Gastrocnemius medialis (tissue), 4 donors: ENCODE measurements at regions of chr2 and their contacts with region 1.

Region 1: GRCh38 chr2:217713395-217714286 is 289.2 kb downstream of the TNS1 start:
- DNase-seq: peak; percentile 38 to 64
- ATAC-seq: peak; percentile 76 to 77
- H3K4me3 ChIP-seq: no peak overlapping the region
- H3K27ac ChIP-seq: peak overlapping the region; percentile 30 to 67 (median 41)
- H3K4me1 ChIP-seq: peaks cover 10 to 18% of the 10 kb centered on the region in 2 donors
- H3K27me3 ChIP-seq: no peaks in the 10 kb centered on the region
- CTCF ChIP-seq: peak; percentile 86 to 99 (median 93)
- POLR2A ChIP-seq: no peak

Region 2: DNA sequence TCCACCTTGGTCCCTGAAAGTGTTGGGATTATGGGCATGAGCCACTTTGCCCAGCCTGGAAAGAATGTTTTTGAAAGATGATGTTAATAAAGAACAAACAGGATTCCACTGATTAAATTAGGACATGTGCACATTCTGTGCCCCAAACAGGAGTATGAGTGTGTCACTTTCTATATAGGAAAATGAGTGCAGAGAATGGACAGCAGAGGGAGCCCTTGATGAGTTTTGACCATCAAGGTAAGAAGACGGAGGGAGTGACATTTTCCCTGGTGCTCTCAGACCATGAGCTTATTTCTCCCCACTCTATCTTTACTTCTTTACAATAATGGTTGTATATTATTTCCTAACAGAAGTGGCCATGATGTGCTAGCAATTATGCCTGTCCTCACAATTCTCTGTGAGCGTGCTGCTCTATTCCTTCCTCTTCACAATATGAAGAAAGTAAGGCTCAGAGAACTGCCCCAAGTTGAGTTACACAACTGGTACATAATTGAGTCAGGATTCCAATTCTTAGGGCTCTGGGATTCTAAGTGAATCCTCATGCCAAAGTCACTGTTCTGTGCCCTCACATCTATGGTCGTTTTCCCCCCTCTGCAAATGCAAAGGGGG is 1194.4 kb before region 1 on chr2:
- in situ Hi-C with region 1: loop called in 1 of 4 experiments (anchors 10 kb)
- intact Hi-C with region 1: loop called (anchors 5 kb)
- DNase-seq: peak; percentile 36 to 48
- ATAC-seq: peak; percentile 82 to 93
- H3K4me3 ChIP-seq: no peak overlapping the region
- H3K27ac ChIP-seq: no peak overlapping the region
- H3K4me1 ChIP-seq: peaks cover 0 to 4% of the 10 kb centered on the region in 2 donors
- H3K27me3 ChIP-seq: no peaks in the 10 kb centered on the region
- CTCF ChIP-seq: peak; percentile 69 to 79 (median 75)
- POLR2A ChIP-seq: no peak

Region 3: GRCh38 chr2:217510771-217511291 is 202.8 kb before region 1 on chr2:
- in situ Hi-C with region 1: loop called in 2 of 4 experiments (anchors 10 to 25 kb)
- intact Hi-C with region 1: loop called (anchors 10 kb)
- DNase-seq: peak; percentile 25 to 60
- ATAC-seq: peak; percentile 96 to 98
- H3K4me3 ChIP-seq: no peak overlapping the region
- H3K27ac ChIP-seq: no peak overlapping the region
- H3K4me1 ChIP-seq: no peaks in the 10 kb centered on the region
- H3K27me3 ChIP-seq: no peaks in the 10 kb centered on the region
- CTCF ChIP-seq: peak; percentile 51 to 72 (median 69)
- POLR2A ChIP-seq: no peak

Region 4: DNA sequence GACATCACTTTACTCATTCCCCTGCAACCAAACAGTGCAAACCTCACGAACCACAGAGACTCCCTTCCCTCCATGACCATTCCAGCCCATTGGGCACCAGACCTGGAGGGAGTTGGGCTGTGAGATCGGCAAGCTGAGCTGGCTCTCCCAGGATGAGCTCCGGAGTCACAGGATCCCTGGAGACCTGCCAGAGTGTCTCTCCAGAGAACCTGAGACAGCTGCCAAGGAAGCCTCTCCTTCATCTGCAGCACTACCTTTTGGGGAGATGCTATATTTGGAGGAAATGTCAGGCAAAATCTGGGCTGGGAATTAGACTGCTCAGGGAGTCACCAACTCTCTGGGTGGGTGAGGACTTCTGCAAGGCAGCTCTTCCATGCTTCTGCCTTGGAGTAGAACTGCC is 128.3 kb before region 1 on chr2:
- in situ Hi-C with region 1: no loop called
- intact Hi-C with region 1: no loop called
- DNase-seq: peak; percentile 14 to 24
- ATAC-seq: peak; percentile 30 to 47
- H3K4me3 ChIP-seq: no peak overlapping the region
- H3K27ac ChIP-seq: no peak overlapping the region
- H3K4me1 ChIP-seq: peaks cover 0 to 7% of the 10 kb centered on the region in 2 donors
- H3K27me3 ChIP-seq: no peaks in the 10 kb centered on the region
- CTCF ChIP-seq: no peak
- POLR2A ChIP-seq: no peak

Region 5: DNA sequence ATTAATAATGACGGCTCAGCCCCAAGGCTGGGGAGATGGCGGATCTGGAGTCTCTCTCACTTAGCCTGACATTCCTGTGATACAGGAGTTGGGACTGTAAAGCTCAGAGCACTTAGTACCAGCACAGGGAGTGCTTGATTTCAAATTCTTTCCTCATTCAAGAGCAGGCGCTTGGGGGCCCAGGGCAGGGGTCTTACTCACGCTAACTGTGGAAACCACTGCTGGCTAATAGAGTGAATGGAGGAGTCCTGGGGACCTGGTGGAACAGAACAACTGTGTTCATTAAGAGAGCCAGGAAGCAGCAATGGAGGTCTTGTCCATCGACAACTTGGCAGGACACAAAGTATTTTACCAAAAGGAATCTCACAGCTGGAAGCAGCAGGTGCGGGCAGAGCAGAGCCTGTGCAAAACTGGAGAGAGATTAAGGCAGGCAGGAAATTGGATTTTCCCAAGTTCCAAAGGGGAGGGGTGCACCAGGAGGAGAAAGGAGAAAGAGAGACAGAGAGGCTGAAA is 69.8 kb before region 1 on chr2:
- in situ Hi-C with region 1: loop called in 1 of 4 experiments (anchors 5 kb)
- intact Hi-C with region 1: no loop called
- DNase-seq: peak; percentile 39 to 59
- ATAC-seq: peak; percentile 59 to 65
- H3K4me3 ChIP-seq: no peak overlapping the region
- H3K27ac ChIP-seq: peak overlapping the region in 3 of 4 donors; percentile 25 to 58 (median 56)
- H3K4me1 ChIP-seq: peaks cover 11 to 36% of the 10 kb centered on the region in 2 donors
- H3K27me3 ChIP-seq: no peaks in the 10 kb centered on the region
- CTCF ChIP-seq: no peak
- POLR2A ChIP-seq: no peak